ENCODE measurements at regions of chr3 and their contacts with region 1.

Region 1: DNA sequence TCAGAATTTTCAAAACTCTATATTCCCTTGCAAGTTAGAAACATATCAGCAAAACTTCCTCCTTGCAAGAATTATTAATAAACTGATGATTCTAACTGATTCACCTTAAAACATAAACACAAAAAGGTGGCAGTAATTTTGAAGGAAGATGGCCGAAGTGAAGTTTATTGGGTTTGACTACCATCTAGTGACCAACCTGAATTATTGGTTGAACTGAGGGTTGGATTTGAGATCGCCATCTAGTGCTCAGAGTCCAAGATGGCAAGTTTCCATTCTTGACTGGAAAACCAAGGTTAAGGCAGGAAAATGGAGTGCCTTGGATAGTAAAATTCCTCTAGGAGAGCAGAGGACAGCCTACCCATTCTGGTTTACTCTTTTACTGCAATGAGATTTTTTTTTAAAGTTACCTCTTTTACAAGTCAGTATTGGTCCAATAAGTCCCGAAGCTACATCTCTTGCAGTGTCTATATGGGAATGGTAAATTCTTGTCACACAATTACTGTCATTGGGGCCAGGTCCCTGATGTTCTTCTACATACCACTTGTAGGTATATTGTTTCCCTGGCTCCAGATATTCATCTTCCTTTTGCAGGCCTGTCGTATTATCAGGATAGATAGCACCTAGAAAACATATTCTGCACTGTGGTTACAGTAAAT is 51.6 kb upstream of the CP start:
- DNase-seq: peak; percentile 48 to 71
- H3K4me3 ChIP-seq: no peak overlapping the region
- H3K27ac ChIP-seq: no peak overlapping the region
- H3K4me1 ChIP-seq: peaks cover 17% of the 10 kb centered on the region
- H3K27me3 ChIP-seq: no peaks in the 10 kb centered on the region
- CTCF ChIP-seq: peak; percentile 89

Region 2: GRCh38 chr3:148727247-148727646 is 546.0 kb before region 1 on chr3:
- CTCF ChIA-PET with region 1: no interaction called
- POLR2A ChIA-PET with region 1: no interaction called
- intact Hi-C with region 1: loop called (anchors 10 kb)
- DNase-seq: peak in 1 of 2 experiments; percentile 17
- H3K4me3 ChIP-seq: no peak overlapping the region
- H3K27ac ChIP-seq: no peak overlapping the region
- H3K4me1 ChIP-seq: no peaks in the 10 kb centered on the region
- H3K27me3 ChIP-seq: no peaks in the 10 kb centered on the region
- CTCF ChIP-seq: peak; percentile 45

Region 3: DNA sequence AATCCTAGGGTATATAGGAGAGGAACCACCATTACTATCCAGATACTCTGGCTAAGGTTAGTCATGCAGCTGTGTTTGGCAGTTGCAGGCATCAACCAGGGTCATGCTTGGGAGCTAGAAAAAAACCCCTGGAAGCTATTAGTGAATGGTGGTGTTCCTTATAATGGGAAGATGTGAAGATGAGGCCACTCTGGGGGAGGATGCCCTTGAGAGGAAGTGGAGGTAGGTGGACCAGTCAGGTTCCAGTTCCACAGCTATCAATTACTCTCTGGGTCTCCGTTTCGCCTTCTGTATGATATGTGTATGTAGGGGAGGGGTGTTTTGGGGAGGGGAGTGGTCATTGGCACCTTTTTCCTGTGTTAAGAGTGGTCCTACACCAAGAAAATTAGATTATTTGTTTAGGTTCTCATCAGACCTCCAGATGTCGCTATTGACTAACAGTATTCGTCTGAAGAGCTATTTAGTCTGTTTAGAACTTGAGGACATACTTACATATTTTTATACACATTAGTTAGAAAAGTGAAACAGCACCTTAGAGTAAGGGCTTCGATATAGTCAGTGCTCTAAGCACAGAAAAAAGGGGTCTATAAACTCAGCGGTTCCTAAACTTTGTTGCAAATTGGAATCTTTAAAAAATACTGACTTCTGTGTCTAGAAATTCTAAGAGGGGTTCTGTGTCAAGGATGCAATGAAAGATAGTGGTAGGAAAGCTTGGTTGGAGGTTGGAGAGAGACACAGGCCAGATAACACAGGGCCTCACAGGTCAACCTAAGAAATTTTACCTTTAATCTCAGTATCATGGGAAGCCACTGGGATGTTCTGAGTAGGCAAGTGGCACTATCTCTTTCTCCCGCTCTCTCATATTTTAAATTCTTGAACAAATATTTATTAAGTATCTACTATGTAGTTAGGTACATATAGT is 152.9 kb before region 1 on chr3:
- CTCF ChIA-PET with region 1: interaction called, 4 read pairs
- POLR2A ChIA-PET with region 1: no interaction called
- intact Hi-C with region 1: loop called (anchors 1 kb)
- DNase-seq: peak in 1 of 2 experiments; percentile 54
- H3K4me3 ChIP-seq: no peak overlapping the region
- H3K27ac ChIP-seq: no peak overlapping the region
- H3K4me1 ChIP-seq: no peaks in the 10 kb centered on the region
- H3K27me3 ChIP-seq: no peaks in the 10 kb centered on the region
- CTCF ChIP-seq: peak; percentile 76

Region 4: GRCh38 chr3:149330609-149331331 is 57.5 kb after region 1 on chr3:
- CTCF ChIA-PET with region 1: interaction called, 5 read pairs
- POLR2A ChIA-PET with region 1: no interaction called
- intact Hi-C with region 1: loop called (anchors 1 kb)
- DNase-seq: no peak
- H3K4me3 ChIP-seq: no peak overlapping the region
- H3K27ac ChIP-seq: no peak overlapping the region
- H3K4me1 ChIP-seq: peaks cover 5% of the 10 kb centered on the region; the same call in 1 of the 2 replicates
- H3K27me3 ChIP-seq: no peaks in the 10 kb centered on the region
- CTCF ChIP-seq: no peak

Region 5: GRCh38 chr3:149480325-149481017 is 207.2 kb after region 1 on chr3:
- CTCF ChIA-PET with region 1: no interaction called
- POLR2A ChIA-PET with region 1: no interaction called
- intact Hi-C with region 1: loop called (anchors 1 kb)
- DNase-seq: peak; percentile 81 to 89
- H3K4me3 ChIP-seq: no peak overlapping the region
- H3K27ac ChIP-seq: peak overlapping the region; percentile 46
- H3K4me1 ChIP-seq: peaks cover 19% of the 10 kb centered on the region
- H3K27me3 ChIP-seq: no peaks in the 10 kb centered on the region
- CTCF ChIP-seq: peak; percentile 87

Region 6: DNA sequence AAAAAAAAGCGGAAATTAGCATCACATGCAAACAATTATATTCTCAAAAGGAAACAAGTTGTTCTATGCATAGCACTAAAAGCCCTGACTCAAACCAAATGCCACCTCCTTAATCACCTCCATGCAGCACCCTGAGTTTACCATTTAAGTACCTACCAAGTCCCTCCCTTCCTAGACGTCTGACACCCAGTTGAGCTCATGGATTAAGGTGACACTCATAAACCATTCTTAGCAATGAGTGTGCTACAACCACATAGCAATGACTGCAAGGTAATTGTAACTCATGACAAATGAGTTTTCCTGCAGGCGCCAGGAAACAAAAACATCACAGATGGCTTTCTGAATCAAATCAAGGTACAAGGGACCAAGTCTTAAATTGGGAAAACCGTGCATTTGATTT is 352.6 kb after region 1 on chr3:
- CTCF ChIA-PET with region 1: no interaction called
- POLR2A ChIA-PET with region 1: no interaction called
- intact Hi-C with region 1: no loop called
- DNase-seq: no peak
- H3K4me3 ChIP-seq: no peak overlapping the region
- H3K27ac ChIP-seq: no peak overlapping the region
- H3K4me1 ChIP-seq: peaks cover 10% of the 10 kb centered on the region
- H3K27me3 ChIP-seq: no peaks in the 10 kb centered on the region
- CTCF ChIP-seq: no peak

Region 7: DNA sequence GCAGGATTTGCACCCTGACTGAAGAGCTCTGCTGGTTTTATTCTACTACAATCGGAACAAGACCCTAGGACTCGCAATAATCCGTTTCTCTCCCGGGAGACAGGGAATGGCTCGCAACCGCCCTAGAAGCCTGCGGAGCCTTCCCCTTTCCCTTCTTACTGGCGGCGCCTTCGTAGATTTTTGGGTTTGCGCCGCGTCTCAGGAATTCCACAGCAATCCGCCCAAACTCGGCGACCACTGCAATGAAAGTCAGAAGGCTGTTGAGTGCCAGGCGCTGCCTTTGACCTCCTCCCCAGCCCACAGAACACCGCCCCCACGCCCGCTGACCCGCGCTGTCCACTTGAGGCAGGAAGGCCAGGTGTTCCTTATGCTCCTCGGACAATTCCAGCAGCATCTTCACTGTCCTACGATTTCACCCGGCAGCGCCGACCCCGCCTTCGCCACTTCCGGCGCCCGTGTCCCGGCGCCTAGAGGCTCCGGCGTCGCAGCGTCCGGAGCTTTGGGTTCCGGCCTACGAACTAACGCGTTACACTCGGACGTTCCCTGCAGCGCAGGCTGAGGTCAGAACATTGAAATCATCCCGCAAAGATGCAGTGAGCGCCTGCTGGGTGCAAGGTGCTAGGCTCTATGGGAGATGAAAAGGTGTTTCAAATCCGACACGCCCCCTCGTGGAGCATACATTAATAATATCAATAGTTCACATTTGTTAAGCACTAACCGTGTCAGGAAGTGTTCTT is 479.0 kb after region 1 on chr3 and contains the start of gene COMMD2:
- CTCF ChIA-PET with region 1: no interaction called
- POLR2A ChIA-PET with region 1: no interaction called
- intact Hi-C with region 1: no loop called
- DNase-seq: peak; percentile 79 to 84
- H3K4me3 ChIP-seq: peak within 1 kb of the TSS; percentile 88
- H3K27ac ChIP-seq: peak within 1 kb of the TSS; percentile 51
- H3K4me1 ChIP-seq: peaks cover 17% of the 10 kb centered on the region
- H3K27me3 ChIP-seq: no peaks in the 10 kb centered on the region
- CTCF ChIP-seq: peak; percentile 74
- total RNA-seq, gene COMMD2: 58.2 and 74.7 TPM in 2 replicates

Region 8: GRCh38 chr3:149969940-149970715 is 696.9 kb after region 1 on chr3:
- CTCF ChIA-PET with region 1: no interaction called
- POLR2A ChIA-PET with region 1: no interaction called
- intact Hi-C with region 1: loop called (anchors 5 kb)
- DNase-seq: peak; percentile 79 to 90
- H3K4me3 ChIP-seq: peak overlapping the region; percentile 78
- H3K27ac ChIP-seq: peak overlapping the region; percentile 88
- H3K4me1 ChIP-seq: peaks cover 35% of the 10 kb centered on the region
- H3K27me3 ChIP-seq: no peaks in the 10 kb centered on the region
- CTCF ChIP-seq: no peak

Measured in PC-9 (cell line).